ENCODE measurements at regions of chr7 and their contacts with region 1.

Region 1: GRCh38 chr7:6228361-6229229 is 43.8 kb downstream of the CYTH3 start:
- DNase-seq: peak in 1 of 2 donors; percentile 48
- ATAC-seq: peak; percentile 62 to 78 (median 72)
- H3K4me3 ChIP-seq: peak overlapping the region in 7 of 10 donors; percentile 3 to 33 (median 19)
- H3K27ac ChIP-seq: peak overlapping the region; percentile 39 to 83 (median 70)
- H3K4me1 ChIP-seq: peaks cover 21 to 100% (median 87%) of the 10 kb centered on the region in 9 donors
- H3K27me3 ChIP-seq: no peaks in the 10 kb centered on the region
- CTCF ChIP-seq: no peak

Region 2: DNA sequence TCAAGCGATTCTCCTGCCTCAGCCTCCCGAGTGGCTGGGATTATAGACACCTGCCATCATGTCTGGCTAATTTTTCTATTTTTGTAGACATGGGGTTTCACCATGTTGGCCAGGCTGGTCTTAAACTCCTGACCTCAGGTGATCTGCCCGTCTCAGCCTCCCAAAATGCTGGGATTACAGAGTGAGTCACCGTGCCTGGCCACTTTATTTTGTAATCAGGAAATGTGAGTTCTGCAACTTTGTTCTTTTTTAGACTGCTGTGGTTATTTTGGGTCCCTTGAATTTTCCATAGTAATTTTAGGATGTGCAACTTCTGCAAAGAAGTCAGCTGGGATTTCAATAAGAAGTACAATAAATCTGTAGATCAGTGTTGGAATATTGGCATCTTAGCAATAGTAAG is 53.0 kb before region 1 on chr7:
- intact Hi-C with region 1: loop called in 1 of 10 experiments (anchors 5 kb)
- DNase-seq: no peak
- ATAC-seq: no peak
- H3K4me3 ChIP-seq: no peak overlapping the region
- H3K27ac ChIP-seq: peak overlapping the region in 4 of 10 donors; percentile 26 to 41 (median 32)
- H3K4me1 ChIP-seq: peaks cover 13 to 80% (median 44%) of the 10 kb centered on the region in 9 donors
- H3K27me3 ChIP-seq: no peaks in the 10 kb centered on the region
- CTCF ChIP-seq: no peak

Region 3: GRCh38 chr7:6256677-6257535 is 28.3 kb after region 1 on chr7:
- intact Hi-C with region 1: loop called in 1 of 10 experiments (anchors 5 kb)
- DNase-seq: peak; percentile 47 to 62
- ATAC-seq: peak; percentile 53 to 88 (median 73)
- H3K4me3 ChIP-seq: peak overlapping the region in 1 of 10 donors; percentile 11
- H3K27ac ChIP-seq: peak overlapping the region; percentile 4 to 79 (median 66)
- H3K4me1 ChIP-seq: peaks cover 18 to 100% (median 86%) of the 10 kb centered on the region in 9 donors
- H3K27me3 ChIP-seq: no peaks in the 10 kb centered on the region
- CTCF ChIP-seq: no peak

Region 4: GRCh38 chr7:6306471-6306870 is 77.9 kb after region 1 on chr7:
- intact Hi-C with region 1: no loop called
- DNase-seq: no peak
- ATAC-seq: peak in 1 of 8 donors; percentile 35
- H3K4me3 ChIP-seq: no peak overlapping the region
- H3K27ac ChIP-seq: no peak overlapping the region
- H3K4me1 ChIP-seq: peaks cover 0 to 15% (median 0%) of the 10 kb centered on the region in 9 donors
- H3K27me3 ChIP-seq: no peaks in the 10 kb centered on the region
- CTCF ChIP-seq: no peak

Measured in heart right ventricle (tissue), 16 donors.